IMR-90 (cell line): ENCODE measurements at regions of chrX and their contacts with region 1.

Region 1: GRCh38 chrX:12771445-12772069 is 19.7 kb upstream of the PRPS2 start:
- DNase-seq: peak; percentile 31
- ATAC-seq: no peak
- H3K4me3 ChIP-seq: no peak overlapping the region
- H3K27ac ChIP-seq: no peak overlapping the region
- H3K4me1 ChIP-seq: no peaks in the 10 kb centered on the region
- H3K27me3 ChIP-seq: peaks cover 6% of the 10 kb centered on the region
- CTCF ChIP-seq: peak; percentile 75
- POLR2A ChIP-seq: no peak
- RAD21 ChIP-seq: peak; percentile 32; the same call in 1 of the 2 replicates

Region 2: GRCh38 chrX:12789976-12790375 is 18.4 kb after region 1 on chrX:
- CTCF ChIA-PET with region 1: no interaction called
- POLR2A ChIA-PET with region 1: interaction called, 13 read pairs
- dilution Hi-C with region 1: no loop called
- in situ Hi-C with region 1: no loop called
- intact Hi-C with region 1: no loop called
- DNase-seq: no peak
- ATAC-seq: no peak
- H3K4me3 ChIP-seq: no peak overlapping the region
- H3K27ac ChIP-seq: no peak overlapping the region
- H3K4me1 ChIP-seq: no peaks in the 10 kb centered on the region
- H3K27me3 ChIP-seq: peaks cover 3% of the 10 kb centered on the region; the same call in 1 of the 2 replicates
- CTCF ChIP-seq: no peak
- POLR2A ChIP-seq: no peak
- RAD21 ChIP-seq: no peak

Region 3: DNA sequence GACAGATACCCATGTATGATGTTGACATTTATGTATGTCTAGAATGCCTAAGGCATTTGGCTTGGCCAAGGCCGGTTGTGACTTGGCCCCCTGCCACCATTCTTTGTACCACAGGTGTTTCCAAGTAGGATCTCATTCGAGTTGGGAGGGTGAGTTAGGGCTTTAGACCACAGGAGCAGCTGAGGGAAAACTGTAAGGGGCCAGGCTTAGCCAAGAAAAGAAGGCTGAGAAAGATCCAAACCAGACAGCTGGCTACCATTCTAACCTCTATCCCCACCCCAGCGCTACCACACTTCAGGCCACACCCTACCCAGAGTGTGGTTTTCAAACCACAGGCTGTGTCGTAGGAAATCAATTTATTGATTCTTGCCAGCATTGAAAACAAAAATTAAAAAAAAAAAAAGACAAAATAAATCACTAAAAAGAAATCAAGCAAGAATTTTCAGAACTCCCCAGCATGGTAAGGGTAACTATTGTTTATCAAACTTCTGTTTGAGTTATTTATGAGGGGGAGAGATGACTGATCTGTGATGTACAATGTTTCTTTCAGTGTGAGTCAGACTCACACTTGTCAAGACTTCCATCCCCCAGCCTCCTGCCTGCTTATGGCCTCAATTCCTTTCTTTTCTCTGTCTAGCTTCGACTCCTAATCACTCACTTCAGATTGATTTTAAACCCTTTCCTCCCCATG is 213.2 kb after region 1 on chrX:
- CTCF ChIA-PET with region 1: no interaction called
- POLR2A ChIA-PET with region 1: no interaction called
- dilution Hi-C with region 1: no loop called
- in situ Hi-C with region 1: no loop called
- intact Hi-C with region 1: no loop called
- DNase-seq: peak; percentile 35
- ATAC-seq: no peak
- H3K4me3 ChIP-seq: no peak overlapping the region
- H3K27ac ChIP-seq: no peak overlapping the region
- H3K4me1 ChIP-seq: no peaks in the 10 kb centered on the region; the same call in 1 of the 2 replicates
- H3K27me3 ChIP-seq: no peaks in the 10 kb centered on the region
- CTCF ChIP-seq: no peak
- POLR2A ChIP-seq: no peak
- RAD21 ChIP-seq: no peak